A673 (cell line): ENCODE measurements at regions of chr14 and their contacts with region 1.

Region 1: DNA sequence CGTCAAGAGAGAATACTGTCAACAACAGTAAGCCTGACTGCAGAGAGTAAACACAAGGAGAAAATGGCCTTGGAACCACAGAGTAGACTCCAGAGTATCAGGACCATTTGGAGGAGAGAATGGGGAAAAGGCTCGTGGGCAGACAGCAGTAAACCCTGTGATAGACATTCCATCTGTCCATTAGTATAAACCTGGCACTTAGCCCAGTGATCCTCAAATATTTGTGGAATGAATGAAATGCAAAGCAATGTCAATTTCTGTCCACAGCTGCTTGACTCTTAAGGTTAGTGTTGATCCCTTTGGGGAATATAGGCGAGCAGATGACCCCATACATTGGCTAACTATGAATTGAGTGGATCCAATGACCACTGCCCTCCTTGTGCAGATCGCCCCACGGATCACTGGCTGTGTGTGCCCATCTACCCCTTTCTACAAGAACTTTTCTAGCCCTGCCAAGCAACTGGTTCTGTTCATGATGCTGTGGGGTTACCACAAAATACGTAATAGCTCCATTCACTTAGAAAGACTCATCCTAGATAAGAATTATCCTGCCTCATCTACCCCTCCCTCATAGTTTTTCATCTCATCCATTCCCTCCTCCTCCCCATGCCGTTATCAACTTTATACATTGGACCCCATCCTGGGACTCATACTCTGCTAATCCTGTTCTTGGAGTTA is 846.8 kb downstream of the NRXN3 start:
- DNase-seq: peak; percentile 11
- H3K4me3 ChIP-seq: no peak overlapping the region
- H3K27ac ChIP-seq: no peak overlapping the region
- H3K4me1 ChIP-seq: no peaks in the 10 kb centered on the region
- H3K27me3 ChIP-seq: no peaks in the 10 kb centered on the region
- CTCF ChIP-seq: no peak

Region 2: GRCh38 chr14:78933948-78934524 is 82.9 kb before region 1 on chr14:
- CTCF ChIA-PET with region 1: interaction called, 11 read pairs
- POLR2A ChIA-PET with region 1: no interaction called
- intact Hi-C with region 1: no loop called
- DNase-seq: peak; percentile 39
- H3K4me3 ChIP-seq: no peak overlapping the region
- H3K27ac ChIP-seq: no peak overlapping the region
- H3K4me1 ChIP-seq: no peaks in the 10 kb centered on the region
- H3K27me3 ChIP-seq: peaks cover 3% of the 10 kb centered on the region
- CTCF ChIP-seq: peak; percentile 64

Region 3: DNA sequence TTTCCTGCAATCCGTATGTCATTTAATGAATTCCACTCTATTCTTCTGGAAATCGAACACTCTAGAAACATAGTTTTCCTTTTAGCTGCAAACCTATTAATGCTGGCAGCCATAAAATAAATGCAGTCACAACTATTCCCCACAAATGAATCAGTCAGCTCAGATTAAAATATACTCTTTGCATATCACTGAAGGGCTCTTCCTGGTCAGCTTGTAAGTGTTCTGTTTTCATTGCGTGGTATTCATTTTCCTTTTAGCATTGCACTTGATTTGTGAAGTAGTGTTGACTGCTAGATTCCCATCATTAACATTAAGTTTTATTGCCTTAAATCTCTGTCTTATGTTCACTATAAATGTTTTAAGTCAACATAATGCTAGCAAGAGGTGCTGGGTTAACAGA is 508.4 kb after region 1 on chr14:
- CTCF ChIA-PET with region 1: no interaction called
- POLR2A ChIA-PET with region 1: no interaction called
- intact Hi-C with region 1: no loop called
- DNase-seq: no peak
- H3K4me3 ChIP-seq: no peak overlapping the region
- H3K27ac ChIP-seq: no peak overlapping the region
- H3K4me1 ChIP-seq: no peaks in the 10 kb centered on the region
- H3K27me3 ChIP-seq: no peaks in the 10 kb centered on the region
- CTCF ChIP-seq: no peak